ENCODE measurements at regions of chr10 and their contacts with region 1.

Region 1: GRCh38 chr10:97081621-97082235 is 104.0 kb downstream of the SLIT1 start:
- DNase-seq: peak; percentile 83
- CTCF ChIP-seq: peak; percentile 73

Region 2: DNA sequence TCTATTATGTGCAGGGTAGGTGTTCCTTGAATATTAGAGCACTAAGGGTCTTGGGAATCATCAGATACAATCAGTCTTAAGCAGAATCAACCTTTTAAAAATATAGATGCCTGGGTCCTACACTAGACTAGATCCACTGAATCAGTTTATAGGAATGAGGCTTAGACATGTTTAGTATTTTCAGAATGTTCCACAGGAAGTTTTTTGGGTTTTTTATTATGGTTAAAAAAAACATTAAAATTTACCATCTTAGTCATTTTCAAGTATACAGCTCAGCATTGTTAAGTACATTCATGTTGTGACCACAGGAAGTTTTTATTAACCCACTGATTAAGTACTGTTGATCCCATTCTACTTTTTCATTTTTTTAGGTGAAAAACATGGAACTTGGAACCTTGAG is 113.9 kb before region 1 on chr10:
- CTCF ChIA-PET with region 1: no interaction called
- POLR2A ChIA-PET with region 1: no interaction called
- DNase-seq: no peak
- CTCF ChIP-seq: no peak

Region 3: GRCh38 chr10:97096261-97097083 is 14.7 kb after region 1 on chr10:
- CTCF ChIA-PET with region 1: interaction called, 20 read pairs
- POLR2A ChIA-PET with region 1: no interaction called
- DNase-seq: peak; percentile 47
- CTCF ChIP-seq: no peak